ENCODE measurements at regions of chr2 and their contacts with region 1.

Region 1: GRCh38 chr2:98487806-98488651 is 43.4 kb downstream of the INPP4A start:
- DNase-seq: peak; percentile 35
- H3K4me3 ChIP-seq: no peak overlapping the region
- H3K27ac ChIP-seq: no peak overlapping the region
- H3K4me1 ChIP-seq: no peaks in the 10 kb centered on the region
- H3K27me3 ChIP-seq: no peaks in the 10 kb centered on the region
- CTCF ChIP-seq: peak; percentile 48 to 52
- POLR2A ChIP-seq: no peak

Region 2: GRCh38 chr2:98157557-98157956 is 330.5 kb before region 1 on chr2:
- CTCF ChIA-PET with region 1: no interaction called
- POLR2A ChIA-PET with region 1: no interaction called
- dilution Hi-C with region 1: no loop called
- intact Hi-C with region 1: no loop called
- DNase-seq: no peak
- H3K4me3 ChIP-seq: no peak overlapping the region
- H3K27ac ChIP-seq: no peak overlapping the region
- H3K4me1 ChIP-seq: no peaks in the 10 kb centered on the region
- H3K27me3 ChIP-seq: peaks cover 1 to 2% of the 10 kb centered on the region in 2 experiments
- CTCF ChIP-seq: no peak
- POLR2A ChIP-seq: no peak

Region 3: DNA sequence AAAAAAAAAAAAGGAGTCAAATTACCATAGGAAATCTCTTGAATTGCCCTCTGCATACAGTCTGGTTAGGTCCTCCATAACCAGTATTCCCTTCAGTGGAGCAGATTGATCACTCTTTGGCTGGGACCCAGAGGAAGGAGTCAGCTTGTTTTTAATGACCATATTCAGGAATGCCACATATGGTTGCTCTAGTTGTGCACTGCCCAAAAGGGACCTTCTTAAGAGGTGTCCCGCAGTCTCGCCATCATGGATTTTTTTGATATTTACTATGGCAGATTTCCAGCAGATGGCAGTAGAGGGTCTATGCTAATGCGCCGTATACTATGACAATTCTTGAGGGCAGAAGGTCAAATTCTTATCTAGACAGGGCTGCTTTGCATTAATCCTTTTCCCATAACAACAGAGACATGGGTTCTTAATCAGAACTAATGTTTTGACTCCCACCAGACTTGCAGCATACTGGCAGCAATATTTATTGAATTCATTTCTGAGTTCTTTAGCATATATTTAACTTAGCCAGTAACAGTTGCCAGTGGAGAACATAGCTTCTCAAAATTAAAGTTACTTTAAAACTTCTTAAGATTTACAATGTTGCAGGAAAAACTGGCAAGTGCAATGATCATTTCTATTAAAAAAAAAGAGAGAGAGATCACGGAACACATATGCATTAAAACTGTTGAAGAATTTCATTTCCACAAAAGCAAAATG is 75.1 kb before region 1 on chr2:
- CTCF ChIA-PET with region 1: interaction called, 18 read pairs
- POLR2A ChIA-PET with region 1: no interaction called
- dilution Hi-C with region 1: no loop called
- intact Hi-C with region 1: no loop called
- DNase-seq: peak; percentile 87
- H3K4me3 ChIP-seq: no peak overlapping the region
- H3K27ac ChIP-seq: no peak overlapping the region
- H3K4me1 ChIP-seq: peaks cover 3% of the 10 kb centered on the region
- H3K27me3 ChIP-seq: no peaks in the 10 kb centered on the region
- CTCF ChIP-seq: peak; percentile 58 to 61
- POLR2A ChIP-seq: no peak

Region 4: DNA sequence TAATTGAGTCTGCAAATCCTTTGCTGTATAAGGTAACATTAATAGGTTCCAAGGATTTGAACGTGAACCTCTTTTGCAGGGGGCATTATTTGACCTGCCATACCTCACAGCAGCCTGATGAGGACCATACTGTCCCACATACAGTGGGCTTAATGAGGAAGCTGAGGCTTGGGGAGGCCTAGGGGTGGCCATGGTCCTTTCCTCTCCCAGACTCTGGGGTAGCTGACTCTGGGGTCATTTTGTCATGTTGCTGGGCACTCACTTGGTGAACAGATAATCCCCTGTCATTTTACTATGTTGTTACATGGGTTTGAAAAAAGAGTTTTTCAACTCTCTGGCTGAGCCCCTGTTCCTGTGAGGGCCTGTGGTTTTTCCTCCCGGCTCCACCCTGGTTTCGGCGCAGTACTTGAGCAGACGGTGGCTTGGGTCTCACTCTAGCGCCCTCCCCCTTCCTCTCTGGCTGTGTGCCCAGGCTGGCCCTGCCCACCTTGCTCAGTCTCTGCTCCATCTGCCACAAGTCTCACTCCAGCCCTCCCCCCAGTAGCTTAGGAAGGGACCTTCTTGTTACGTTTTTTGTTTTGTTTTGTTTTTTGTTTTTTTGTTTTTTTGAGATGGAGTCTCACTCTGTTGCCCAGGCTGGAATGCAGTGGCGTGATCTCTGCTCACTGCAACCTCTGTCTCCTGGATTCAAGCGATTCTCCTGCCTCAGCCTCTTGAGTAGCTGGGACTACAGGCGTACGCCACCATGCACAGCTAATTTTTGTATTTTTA is 22.4 kb before region 1 on chr2:
- CTCF ChIA-PET with region 1: interaction called, 18 read pairs
- POLR2A ChIA-PET with region 1: no interaction called
- dilution Hi-C with region 1: no loop called
- intact Hi-C with region 1: no loop called
- DNase-seq: peak; percentile 92
- H3K4me3 ChIP-seq: no peak overlapping the region
- H3K27ac ChIP-seq: peak overlapping the region; percentile 46
- H3K4me1 ChIP-seq: peaks cover 20% of the 10 kb centered on the region
- H3K27me3 ChIP-seq: no peaks in the 10 kb centered on the region
- CTCF ChIP-seq: no peak
- POLR2A ChIP-seq: no peak

Region 5: DNA sequence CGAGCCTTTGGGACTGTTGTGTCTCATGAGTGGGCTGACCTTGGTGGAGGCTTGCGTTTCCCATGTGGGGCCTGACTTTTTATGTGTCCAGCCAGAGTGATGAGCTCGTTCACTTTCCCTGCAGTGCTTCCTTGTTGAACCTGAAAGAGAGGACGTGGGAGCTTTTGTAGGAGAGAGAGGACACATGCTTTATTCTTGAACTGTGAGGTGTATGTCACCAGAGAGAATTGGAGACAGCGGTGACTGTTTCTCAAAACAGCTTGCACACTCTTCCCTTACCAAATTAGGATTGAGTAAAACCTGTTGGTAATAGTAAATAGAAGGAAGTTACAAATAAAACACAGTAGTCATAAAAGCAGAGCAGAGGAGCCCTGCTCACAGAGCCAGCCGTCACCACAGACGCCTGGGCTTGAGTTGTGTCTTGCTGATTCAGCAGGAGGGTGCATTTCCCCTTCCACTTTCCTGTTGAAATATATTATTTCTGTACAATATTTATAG is 17.3 kb after region 1 on chr2:
- CTCF ChIA-PET with region 1: interaction called, 16 read pairs
- POLR2A ChIA-PET with region 1: no interaction called
- dilution Hi-C with region 1: no loop called
- intact Hi-C with region 1: no loop called
- DNase-seq: peak; percentile 34
- H3K4me3 ChIP-seq: no peak overlapping the region
- H3K27ac ChIP-seq: no peak overlapping the region
- H3K4me1 ChIP-seq: peaks cover 3% of the 10 kb centered on the region
- H3K27me3 ChIP-seq: no peaks in the 10 kb centered on the region
- CTCF ChIP-seq: no peak
- POLR2A ChIP-seq: no peak

Region 6: DNA sequence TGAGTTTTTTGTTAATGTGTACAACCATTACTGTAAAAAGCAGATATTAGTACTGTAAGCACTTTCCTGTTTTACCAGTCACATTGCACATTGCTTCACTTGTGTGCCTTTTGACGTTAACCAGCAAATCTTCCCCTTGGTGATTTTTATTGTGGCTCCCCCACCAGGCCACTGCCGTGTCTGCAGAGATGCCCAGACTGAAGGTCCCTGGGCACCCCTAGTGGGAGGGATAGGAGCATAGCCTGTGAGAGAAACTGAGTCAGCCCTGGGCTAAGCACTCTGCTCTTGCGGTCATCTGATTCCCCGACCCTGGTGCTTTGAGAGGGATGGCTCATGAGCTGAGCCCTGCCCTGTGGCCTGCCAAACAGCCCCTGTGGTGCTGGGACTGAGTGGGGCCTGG is 30.1 kb after region 1 on chr2:
- CTCF ChIA-PET with region 1: interaction called, 10 read pairs
- POLR2A ChIA-PET with region 1: interaction called, 9 read pairs
- dilution Hi-C with region 1: no loop called
- intact Hi-C with region 1: no loop called
- DNase-seq: peak; percentile 65
- H3K4me3 ChIP-seq: no peak overlapping the region
- H3K27ac ChIP-seq: no peak overlapping the region
- H3K4me1 ChIP-seq: peaks cover 7% of the 10 kb centered on the region
- H3K27me3 ChIP-seq: no peaks in the 10 kb centered on the region
- CTCF ChIP-seq: peak; percentile 38 to 68
- POLR2A ChIP-seq: no peak

Region 7: DNA sequence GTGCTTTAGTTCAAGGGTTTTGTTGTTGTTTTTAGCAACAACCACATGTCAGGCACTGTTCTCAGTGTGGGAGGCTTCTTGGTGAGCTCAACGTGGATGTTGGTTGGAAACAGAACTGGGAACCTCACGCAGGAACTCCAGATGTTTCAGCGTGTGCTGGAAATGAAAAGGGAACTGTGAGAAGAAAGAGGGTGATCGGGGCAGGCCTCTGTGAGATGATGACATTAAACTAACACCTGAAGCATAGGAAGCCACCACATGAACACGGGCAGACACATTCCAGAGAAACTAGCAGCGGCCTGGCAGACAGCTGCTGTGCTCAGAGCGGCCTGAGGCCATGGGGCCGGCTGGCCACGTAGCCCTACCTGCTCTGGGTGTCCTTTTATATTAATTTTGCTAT is 53.9 kb after region 1 on chr2:
- CTCF ChIA-PET with region 1: interaction called, 10 read pairs
- POLR2A ChIA-PET with region 1: no interaction called
- dilution Hi-C with region 1: no loop called
- intact Hi-C with region 1: no loop called
- DNase-seq: no peak
- H3K4me3 ChIP-seq: no peak overlapping the region
- H3K27ac ChIP-seq: no peak overlapping the region
- H3K4me1 ChIP-seq: no peaks in the 10 kb centered on the region
- H3K27me3 ChIP-seq: no peaks in the 10 kb centered on the region
- CTCF ChIP-seq: no peak
- POLR2A ChIP-seq: no peak